ENCODE measurements at regions of chr9 and their contacts with region 1.

Region 1: GRCh38 chr9:116494815-116495634 is 192.1 kb upstream of the TRIM32 start:
- DNase-seq: peak in 2 of 3 donors; percentile 26 to 75
- ATAC-seq: peak; percentile 67
- H3K4me3 ChIP-seq: no peak overlapping the region
- H3K4me1 ChIP-seq: no peaks in the 10 kb centered on the region
- CTCF ChIP-seq: peak; percentile 57

Region 2: DNA sequence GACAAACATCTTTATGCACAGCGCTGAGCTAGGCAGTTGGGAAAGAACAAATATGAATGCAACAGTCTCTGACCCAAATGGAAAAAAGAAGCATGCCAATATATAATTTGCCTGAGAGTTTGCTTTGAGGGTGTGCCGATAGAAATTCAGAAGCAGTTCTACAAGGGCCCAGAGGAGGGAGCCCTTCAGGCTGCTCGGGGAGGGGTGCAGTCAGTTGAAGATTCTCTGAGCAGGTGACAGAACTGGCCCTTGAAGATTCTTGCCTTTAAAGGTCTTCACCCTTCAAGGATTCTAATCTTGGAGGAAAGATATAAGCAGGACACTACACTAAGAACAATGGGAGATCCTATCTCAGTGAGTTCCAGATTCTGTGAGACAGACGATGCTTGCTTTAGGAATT is 345.2 kb before region 1 on chr9:
- intact Hi-C with region 1: loop called in 1 of 2 experiments (anchors 10 kb)
- DNase-seq: peak in 2 of 3 donors; percentile 25 to 43
- ATAC-seq: peak; percentile 81
- H3K4me3 ChIP-seq: no peak overlapping the region
- H3K4me1 ChIP-seq: peaks cover 5% of the 10 kb centered on the region
- CTCF ChIP-seq: peak; percentile 57